Natural killer cell (primary cell): ENCODE measurements at regions of chr12 and their contacts with region 1.

Region 1: GRCh38 chr12:15882118-15882971 is at the start of gene STRAP:
- DNase-seq: peak; percentile 97 to 98
- ATAC-seq: peak; percentile 91 to 98 (median 91)
- H3K4me3 ChIP-seq: peak within 1 kb of the TSS; percentile 95
- H3K4me3 Mint-ChIP-seq: peak within 1 kb of the TSS; percentile 96
- H3K27ac ChIP-seq: peak within 1 kb of the TSS; percentile 99
- H3K27ac Mint-ChIP-seq: peak within 1 kb of the TSS; percentile 98 to 99
- H3K4me1 ChIP-seq: peaks cover 16% of the 10 kb centered on the region
- H3K4me1 Mint-ChIP-seq: peaks cover 37 to 57% of the 10 kb centered on the region in 2 donors
- H3K27me3 ChIP-seq: no peaks in the 10 kb centered on the region
- H3K27me3 Mint-ChIP-seq: peaks cover 0 to 8% of the 10 kb centered on the region in 2 donors
- CTCF ChIP-seq: no peak
- total RNA-seq, gene STRAP: 90.7 to 117 (median 91.0) TPM

Region 2: DNA sequence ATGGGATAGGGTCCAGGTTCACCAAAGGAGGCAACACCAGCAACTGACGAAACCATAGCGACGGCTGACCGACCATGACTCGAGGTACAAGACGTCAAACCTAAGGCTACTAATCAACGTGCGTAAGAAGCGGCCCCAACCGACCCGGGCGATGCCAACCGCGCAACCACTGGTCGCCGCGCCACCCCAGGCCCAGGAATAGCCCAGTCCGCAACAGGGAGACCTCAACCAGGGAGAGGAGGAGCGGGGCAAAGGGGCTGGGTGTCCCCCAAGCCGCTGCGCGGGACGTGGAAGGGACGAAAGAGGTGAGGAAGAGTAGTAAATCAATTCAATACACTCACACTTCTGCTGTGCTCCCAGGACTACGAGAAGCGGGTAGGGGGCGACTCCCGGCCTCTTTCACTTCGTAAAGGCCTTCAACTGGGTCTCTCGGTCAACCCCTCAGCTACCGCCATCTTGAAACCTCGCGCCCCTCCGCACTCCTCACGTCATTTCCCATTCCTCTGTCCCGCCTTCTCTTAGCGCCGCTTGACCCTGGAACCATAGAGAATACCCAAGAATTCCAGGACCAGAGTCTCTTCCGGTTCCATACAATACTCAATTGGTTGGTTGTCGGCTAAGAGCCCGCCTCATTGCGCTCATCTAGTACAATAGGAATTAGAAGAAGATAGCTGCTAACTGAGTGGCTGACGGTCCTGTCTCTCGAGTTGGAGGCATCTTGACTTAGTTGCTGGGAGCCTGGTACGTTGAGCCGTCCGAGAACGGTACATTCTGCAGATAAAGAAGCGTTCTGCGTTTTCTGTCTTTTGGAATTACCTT is 1079.1 kb before region 1 on chr12 and contains the starts of genes C12orf60 and WBP11:
- intact Hi-C with region 1: loop called (anchors 5 kb)
- DNase-seq: peak; percentile 79 to 96
- ATAC-seq: peak; percentile 88 to 98 (median 94)
- H3K4me3 ChIP-seq: peak within 1 kb of the TSS; percentile 92
- H3K4me3 Mint-ChIP-seq: no peak within 1 kb of the TSS
- H3K27ac ChIP-seq: peak within 1 kb of the TSS; percentile 98
- H3K27ac Mint-ChIP-seq: no peak within 1 kb of the TSS
- H3K4me1 ChIP-seq: peaks cover 10% of the 10 kb centered on the region
- H3K4me1 Mint-ChIP-seq: peaks cover 0 to 15% of the 10 kb centered on the region in 2 donors
- H3K27me3 ChIP-seq: no peaks in the 10 kb centered on the region
- H3K27me3 Mint-ChIP-seq: no peaks in the 10 kb centered on the region
- CTCF ChIP-seq: no peak
- total RNA-seq, gene C12orf60: 0.28 to 0.79 (median 0.33) TPM
- total RNA-seq, gene WBP11: 130 to 159 (median 134) TPM

Region 3: GRCh38 chr12:15453613-15454012 is 428.7 kb before region 1 on chr12:
- intact Hi-C with region 1: no loop called
- DNase-seq: no peak
- ATAC-seq: no peak
- H3K4me3 ChIP-seq: no peak overlapping the region
- H3K4me3 Mint-ChIP-seq: no peak overlapping the region
- H3K27ac ChIP-seq: no peak overlapping the region
- H3K27ac Mint-ChIP-seq: no peak overlapping the region
- H3K4me1 ChIP-seq: no peaks in the 10 kb centered on the region
- H3K4me1 Mint-ChIP-seq: no peaks in the 10 kb centered on the region
- H3K27me3 ChIP-seq: no peaks in the 10 kb centered on the region
- H3K27me3 Mint-ChIP-seq: peaks cover 0 to 2% of the 10 kb centered on the region in 2 donors
- CTCF ChIP-seq: no peak

Region 4: GRCh38 chr12:15789220-15790171 is 92.8 kb before region 1 on chr12 and contains the start of gene EPS8:
- intact Hi-C with region 1: loop called (anchors 2 kb)
- DNase-seq: peak; percentile 88 to 93
- ATAC-seq: peak; percentile 91 to 95 (median 95)
- H3K4me3 ChIP-seq: peak within 1 kb of the TSS; percentile 60
- H3K4me3 Mint-ChIP-seq: peak within 1 kb of the TSS; percentile 99
- H3K27ac ChIP-seq: peak within 1 kb of the TSS; percentile 63
- H3K27ac Mint-ChIP-seq: peak within 1 kb of the TSS; percentile 81 to 83
- H3K4me1 ChIP-seq: peaks cover 18% of the 10 kb centered on the region
- H3K4me1 Mint-ChIP-seq: peaks cover 19% of the 10 kb centered on the region in 2 donors
- H3K27me3 ChIP-seq: peaks cover 41% of the 10 kb centered on the region
- H3K27me3 Mint-ChIP-seq: peaks cover 47 to 65% of the 10 kb centered on the region in 2 donors
- CTCF ChIP-seq: no peak
- total RNA-seq, gene EPS8: 1.5 to 2.6 (median 1.5) TPM

Region 5: DNA sequence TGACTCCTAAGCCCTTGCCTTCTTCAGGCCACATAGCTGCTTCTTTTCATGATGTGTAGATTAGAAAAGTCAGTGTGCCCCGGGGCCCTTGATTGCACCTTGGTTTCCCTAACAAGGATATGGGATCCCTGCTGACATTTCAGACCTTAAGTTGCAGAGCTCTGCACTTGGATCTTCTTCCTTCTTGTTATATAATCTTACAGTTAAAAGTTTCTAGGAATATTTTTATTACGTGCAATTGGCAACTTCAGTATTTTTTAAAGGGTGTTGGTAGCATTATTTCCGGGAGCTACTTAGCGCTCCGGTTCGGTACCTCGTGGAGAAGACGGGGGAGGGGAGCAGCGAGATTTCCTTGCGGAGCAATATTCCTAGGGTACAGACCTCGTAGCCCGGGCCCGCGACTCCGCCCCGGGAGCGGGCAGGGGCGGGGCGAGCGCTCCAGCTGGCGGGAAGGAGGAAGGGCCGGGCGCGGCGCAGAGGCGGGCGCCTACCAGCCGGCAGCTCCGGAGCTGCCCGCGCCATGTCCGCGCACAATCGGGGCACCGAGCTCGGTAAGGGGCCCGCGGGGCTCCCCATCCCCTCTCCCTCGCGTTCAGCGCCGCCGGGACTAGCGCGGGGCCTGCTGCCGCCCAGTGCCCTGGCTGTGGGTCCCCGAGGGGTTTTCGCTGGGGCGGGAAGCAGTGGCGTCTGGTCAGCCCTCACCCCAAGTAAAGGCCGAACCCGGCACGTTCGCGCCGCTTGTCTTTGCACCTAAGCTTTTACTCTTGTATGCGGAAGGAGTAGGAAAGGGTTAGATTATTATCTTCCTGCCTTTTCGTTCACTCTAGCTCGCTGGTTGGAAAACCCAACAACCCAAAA is 28.7 kb after region 1 on chr12 and contains the start of gene DERA:
- intact Hi-C with region 1: loop called (anchors 1 kb)
- DNase-seq: peak; percentile 54 to 71
- ATAC-seq: peak; percentile 87 to 91 (median 90)
- H3K4me3 ChIP-seq: peak within 1 kb of the TSS; percentile 75
- H3K4me3 Mint-ChIP-seq: peak within 1 kb of the TSS; percentile 96
- H3K27ac ChIP-seq: peak within 1 kb of the TSS; percentile 84
- H3K27ac Mint-ChIP-seq: peak within 1 kb of the TSS; percentile 89 to 90
- H3K4me1 ChIP-seq: peaks cover 3% of the 10 kb centered on the region
- H3K4me1 Mint-ChIP-seq: peaks cover 22 to 25% of the 10 kb centered on the region in 2 donors
- H3K27me3 ChIP-seq: no peaks in the 10 kb centered on the region
- H3K27me3 Mint-ChIP-seq: no peaks in the 10 kb centered on the region
- CTCF ChIP-seq: no peak
- total RNA-seq, gene DERA: 15.6 to 22.1 (median 20.4) TPM